ENCODE measurements at regions of chr2 and their contacts with region 1.

Region 1: DNA sequence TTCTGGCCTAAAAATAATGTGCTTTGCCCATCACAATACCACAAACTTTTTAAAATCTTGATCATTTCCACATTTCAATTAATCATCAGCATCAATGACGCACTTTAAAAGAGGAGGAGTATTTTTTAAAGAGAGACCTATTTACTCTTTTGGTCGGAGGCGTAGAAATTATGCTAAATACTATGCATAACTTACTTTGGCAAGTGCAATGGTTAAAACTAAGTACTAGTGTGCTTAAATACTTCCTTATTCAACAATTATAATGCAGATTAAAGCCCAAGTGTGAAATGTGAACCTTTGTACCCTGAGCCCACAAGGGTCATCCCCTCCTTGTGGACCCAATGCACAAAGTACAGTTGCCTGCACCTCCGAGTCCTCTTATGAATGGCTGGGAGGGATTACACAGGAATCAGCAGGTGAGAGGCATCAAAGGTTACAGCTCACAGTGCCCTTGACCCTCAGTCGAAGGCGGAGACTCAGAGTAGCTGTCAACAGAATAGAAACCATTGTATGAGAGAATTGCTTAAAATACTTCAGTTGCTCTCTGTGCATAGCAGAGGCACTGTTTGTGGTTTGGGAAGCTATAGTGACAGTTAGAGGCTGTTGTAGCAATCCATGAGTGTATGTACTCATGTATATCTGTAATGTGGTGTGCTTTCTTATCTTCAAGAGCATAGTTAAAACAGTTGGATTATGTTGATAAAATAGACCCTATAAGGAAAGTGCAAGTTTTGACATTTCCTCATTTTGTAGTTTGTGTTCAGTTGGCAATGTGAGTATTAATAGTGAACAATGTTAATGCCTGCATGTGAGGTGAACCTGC is 151.7 kb upstream of the ITGA4 start:
- DNase-seq: peak; percentile 22
- ATAC-seq: peak; percentile 49
- H3K4me3 Mint-ChIP-seq: peak overlapping the region; percentile 70
- H3K27ac Mint-ChIP-seq: peak overlapping the region; percentile 95
- H3K4me1 Mint-ChIP-seq: peaks cover 69% of the 10 kb centered on the region
- H3K27me3 Mint-ChIP-seq: no peaks in the 10 kb centered on the region
- CTCF ChIP-seq: no peak

Region 2: DNA sequence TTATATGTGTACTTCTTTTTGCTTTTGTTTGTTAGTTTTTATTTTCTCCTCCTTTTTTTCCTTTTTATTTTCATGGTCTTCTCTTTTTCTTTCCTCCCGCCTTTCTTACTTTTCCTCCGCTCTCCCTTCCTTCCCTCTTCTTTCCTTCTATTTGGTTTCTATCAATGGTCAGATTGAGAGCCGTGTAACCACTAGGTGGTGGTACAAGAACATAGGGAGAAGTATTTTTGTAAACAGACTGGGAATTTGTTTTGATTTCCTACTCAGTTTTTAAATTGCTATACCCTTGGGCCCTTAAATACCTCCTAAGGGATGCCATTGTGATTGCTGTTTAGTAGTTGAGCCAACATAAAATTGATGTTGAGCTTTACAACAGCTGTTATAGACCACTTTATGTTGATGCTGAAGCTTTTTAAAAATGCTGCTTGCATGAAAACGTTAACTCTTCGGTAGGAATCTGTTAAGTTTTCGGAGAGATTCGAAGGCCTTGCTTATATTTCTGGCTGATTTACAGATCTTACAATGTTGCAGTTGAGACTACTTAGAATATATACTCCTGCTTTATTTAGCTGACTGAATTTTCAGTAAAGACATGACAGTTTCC is 200.9 kb before region 1 on chr2:
- CTCF ChIA-PET with region 1: interaction called, 22 read pairs
- POLR2A ChIA-PET with region 1: no interaction called
- intact Hi-C with region 1: loop called (anchors 2 kb)
- DNase-seq: no peak
- ATAC-seq: no peak
- H3K4me3 Mint-ChIP-seq: no peak overlapping the region
- H3K27ac Mint-ChIP-seq: no peak overlapping the region
- H3K4me1 Mint-ChIP-seq: peaks cover 8% of the 10 kb centered on the region
- H3K27me3 Mint-ChIP-seq: no peaks in the 10 kb centered on the region
- CTCF ChIP-seq: no peak

Region 3: DNA sequence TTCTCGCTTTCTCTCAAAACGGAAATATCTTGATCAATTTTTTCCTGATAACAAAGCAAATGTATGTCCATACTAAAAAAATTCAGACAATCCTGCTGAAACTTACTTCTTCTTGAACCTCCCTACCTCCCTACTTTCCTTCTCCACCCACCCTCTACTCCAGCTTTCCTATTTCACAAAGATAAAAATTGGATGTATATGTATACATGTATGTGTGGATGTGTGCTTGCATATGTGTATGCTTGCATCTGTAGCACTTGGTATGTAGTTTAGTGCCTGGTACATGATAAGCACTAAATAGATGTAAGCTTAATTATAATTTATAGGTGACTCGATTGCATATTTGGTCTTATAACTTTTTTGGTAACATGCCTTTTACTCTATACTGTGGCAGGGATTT is 15.8 kb before region 1 on chr2:
- CTCF ChIA-PET with region 1: no interaction called
- POLR2A ChIA-PET with region 1: no interaction called
- intact Hi-C with region 1: no loop called
- DNase-seq: no peak
- ATAC-seq: no peak
- H3K4me3 Mint-ChIP-seq: no peak overlapping the region
- H3K27ac Mint-ChIP-seq: no peak overlapping the region
- H3K4me1 Mint-ChIP-seq: no peaks in the 10 kb centered on the region
- H3K27me3 Mint-ChIP-seq: no peaks in the 10 kb centered on the region
- CTCF ChIP-seq: no peak

Region 4: GRCh38 chr2:181319286-181319685 is 13.8 kb after region 1 on chr2:
- CTCF ChIA-PET with region 1: interaction called, 19 read pairs
- POLR2A ChIA-PET with region 1: interaction called, 11 read pairs
- intact Hi-C with region 1: no loop called
- DNase-seq: no peak
- ATAC-seq: no peak
- H3K4me3 Mint-ChIP-seq: no peak overlapping the region
- H3K27ac Mint-ChIP-seq: no peak overlapping the region
- H3K4me1 Mint-ChIP-seq: peaks cover 16% of the 10 kb centered on the region
- H3K27me3 Mint-ChIP-seq: no peaks in the 10 kb centered on the region
- CTCF ChIP-seq: no peak

Region 5: GRCh38 chr2:181419129-181419855 is 113.8 kb after region 1 on chr2:
- CTCF ChIA-PET with region 1: interaction called, 3 read pairs
- POLR2A ChIA-PET with region 1: interaction called, 3 read pairs
- intact Hi-C with region 1: loop called (anchors 1 kb)
- DNase-seq: no peak
- ATAC-seq: peak; percentile 82
- H3K4me3 Mint-ChIP-seq: peak overlapping the region; percentile 20
- H3K27ac Mint-ChIP-seq: peak overlapping the region; percentile 87
- H3K4me1 Mint-ChIP-seq: peaks cover 75% of the 10 kb centered on the region
- H3K27me3 Mint-ChIP-seq: no peaks in the 10 kb centered on the region
- CTCF ChIP-seq: no peak

Region 6: GRCh38 chr2:181466661-181467576 is 161.4 kb after region 1 on chr2:
- CTCF ChIA-PET with region 1: interaction called, 79 read pairs
- POLR2A ChIA-PET with region 1: interaction called, 10 read pairs
- intact Hi-C with region 1: loop called (anchors 1 kb)
- DNase-seq: peak; percentile 53
- ATAC-seq: peak; percentile 45
- H3K4me3 Mint-ChIP-seq: no peak overlapping the region
- H3K27ac Mint-ChIP-seq: peak overlapping the region; percentile 26
- H3K4me1 Mint-ChIP-seq: peaks cover 88% of the 10 kb centered on the region
- H3K27me3 Mint-ChIP-seq: no peaks in the 10 kb centered on the region
- CTCF ChIP-seq: peak; percentile 82

Region 7: GRCh38 chr2:181891966-181892798 is 586.7 kb after region 1 on chr2:
- CTCF ChIA-PET with region 1: no interaction called
- POLR2A ChIA-PET with region 1: no interaction called
- intact Hi-C with region 1: loop called (anchors 5 kb)
- DNase-seq: peak; percentile 63
- ATAC-seq: peak; percentile 49
- H3K4me3 Mint-ChIP-seq: peak overlapping the region; percentile 92
- H3K27ac Mint-ChIP-seq: peak overlapping the region; percentile 65
- H3K4me1 Mint-ChIP-seq: peaks cover 25% of the 10 kb centered on the region
- H3K27me3 Mint-ChIP-seq: peaks cover 9% of the 10 kb centered on the region
- CTCF ChIP-seq: no peak

Measured in activated B cell treated with CpG ODN at 0.5 μM for 24 hours (primary cell).